ENCODE measurements at regions of chr1 and their contacts with region 1.

Region 1: DNA sequence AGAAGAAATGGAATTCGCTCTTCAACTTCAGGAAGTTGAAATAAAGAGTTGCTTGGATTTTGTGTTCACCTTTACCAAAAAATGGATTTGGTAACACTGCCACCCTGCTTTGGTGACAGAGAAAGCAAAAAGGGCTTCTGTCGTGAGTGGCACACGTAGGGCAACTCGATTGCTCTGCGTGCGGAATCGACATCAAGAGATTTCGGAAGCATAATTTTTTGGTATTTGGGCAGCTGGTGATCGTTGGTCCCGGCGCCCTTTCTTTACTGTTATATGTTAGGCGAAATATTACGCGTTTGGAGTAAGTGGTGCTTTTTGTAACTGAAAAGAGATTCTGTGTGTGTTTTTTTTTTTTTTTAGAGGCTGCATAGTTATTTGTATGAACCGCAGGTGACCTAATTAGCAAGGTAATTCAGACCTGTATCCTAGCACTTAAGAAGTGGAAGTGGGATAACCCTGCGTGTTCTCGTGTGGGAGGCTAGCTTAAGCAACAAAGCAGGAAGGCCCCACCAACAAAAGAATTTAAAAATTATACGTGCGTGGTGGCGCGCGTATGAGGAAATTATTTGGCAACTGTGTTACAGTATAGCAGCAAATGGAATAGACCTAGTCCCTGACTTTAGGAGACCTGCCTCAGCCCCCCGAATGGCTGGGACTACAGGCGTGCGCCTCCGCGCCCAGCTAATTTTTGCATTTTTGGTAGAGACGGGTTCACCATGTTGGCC is at the start of gene RNU11:
- DNase-seq: peak; percentile 77 to 97 (median 85)
- ATAC-seq: peak; percentile 67
- H3K4me3 ChIP-seq: peak within 1 kb of the TSS; percentile 50
- H3K4me3 Mint-ChIP-seq: peak within 1 kb of the TSS; percentile 78
- H3K27ac ChIP-seq: peak within 1 kb of the TSS; percentile 88 to 93
- H3K27ac Mint-ChIP-seq: peak within 1 kb of the TSS; percentile 96
- H3K4me1 ChIP-seq: peaks cover 36% of the 10 kb centered on the region
- H3K4me1 Mint-ChIP-seq: peaks cover 32% of the 10 kb centered on the region
- H3K27me3 ChIP-seq: no peaks in the 10 kb centered on the region
- H3K27me3 Mint-ChIP-seq: no peaks in the 10 kb centered on the region
- CTCF ChIP-seq: no peak
- total RNA-seq, gene RNU11: not detected

Region 2: DNA sequence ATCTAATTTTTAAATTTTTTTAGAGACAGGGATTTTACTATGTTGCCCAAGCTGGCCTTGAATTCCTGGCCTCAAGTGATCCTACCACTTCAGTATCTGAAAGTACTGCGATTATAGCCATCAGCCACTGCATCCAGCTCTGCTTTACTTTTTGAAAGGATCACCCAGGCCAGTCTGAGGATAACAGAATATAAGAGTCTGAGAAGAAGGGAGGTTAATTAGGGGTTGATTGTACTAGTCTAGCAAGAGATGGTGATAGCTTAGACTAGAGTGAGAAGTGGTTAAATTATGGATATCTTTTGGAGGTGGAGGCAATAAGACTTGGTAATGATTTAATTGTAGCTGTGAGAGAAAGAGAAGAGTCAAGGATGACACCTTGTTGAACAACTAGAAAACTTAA is 246.9 kb before region 1 on chr1:
- CTCF ChIA-PET with region 1: no interaction called
- POLR2A ChIA-PET with region 1: no interaction called
- intact Hi-C with region 1: no loop called
- DNase-seq: no peak
- ATAC-seq: no peak
- H3K4me3 ChIP-seq: no peak overlapping the region
- H3K4me3 Mint-ChIP-seq: no peak overlapping the region
- H3K27ac ChIP-seq: no peak overlapping the region
- H3K27ac Mint-ChIP-seq: no peak overlapping the region
- H3K4me1 ChIP-seq: no peaks in the 10 kb centered on the region
- H3K4me1 Mint-ChIP-seq: peaks cover 8% of the 10 kb centered on the region
- H3K27me3 ChIP-seq: no peaks in the 10 kb centered on the region
- H3K27me3 Mint-ChIP-seq: no peaks in the 10 kb centered on the region
- CTCF ChIP-seq: no peak

Region 3: GRCh38 chr1:28775121-28775944 is 126.7 kb after region 1 on chr1:
- CTCF ChIA-PET with region 1: no interaction called
- POLR2A ChIA-PET with region 1: interaction called, 36 read pairs
- intact Hi-C with region 1: no loop called
- DNase-seq: peak; percentile 39 to 89 (median 66)
- ATAC-seq: peak; percentile 93
- H3K4me3 ChIP-seq: peak overlapping the region; percentile 54
- H3K4me3 Mint-ChIP-seq: peak overlapping the region; percentile 88
- H3K27ac ChIP-seq: peak overlapping the region; percentile 26 to 38
- H3K27ac Mint-ChIP-seq: peak overlapping the region; percentile 90
- H3K4me1 ChIP-seq: peaks cover 14% of the 10 kb centered on the region
- H3K4me1 Mint-ChIP-seq: peaks cover 13% of the 10 kb centered on the region
- H3K27me3 ChIP-seq: no peaks in the 10 kb centered on the region
- H3K27me3 Mint-ChIP-seq: no peaks in the 10 kb centered on the region
- CTCF ChIP-seq: no peak